ENCODE measurements at regions of chr2 and their contacts with region 1.

Region 1: GRCh38 chr2:97819754-97820153 is 106.4 kb downstream of the ZAP70 start:
- DNase-seq: no peak
- ATAC-seq: no peak
- H3K4me3 ChIP-seq: no peak overlapping the region
- H3K27ac ChIP-seq: no peak overlapping the region
- H3K4me1 ChIP-seq: no peaks in the 10 kb centered on the region
- H3K27me3 ChIP-seq: no peaks in the 10 kb centered on the region
- CTCF ChIP-seq: no peak
- EP300 ChIP-seq: no peak
- POLR2A ChIP-seq: no peak
- RAD21 ChIP-seq: no peak

Region 2: DNA sequence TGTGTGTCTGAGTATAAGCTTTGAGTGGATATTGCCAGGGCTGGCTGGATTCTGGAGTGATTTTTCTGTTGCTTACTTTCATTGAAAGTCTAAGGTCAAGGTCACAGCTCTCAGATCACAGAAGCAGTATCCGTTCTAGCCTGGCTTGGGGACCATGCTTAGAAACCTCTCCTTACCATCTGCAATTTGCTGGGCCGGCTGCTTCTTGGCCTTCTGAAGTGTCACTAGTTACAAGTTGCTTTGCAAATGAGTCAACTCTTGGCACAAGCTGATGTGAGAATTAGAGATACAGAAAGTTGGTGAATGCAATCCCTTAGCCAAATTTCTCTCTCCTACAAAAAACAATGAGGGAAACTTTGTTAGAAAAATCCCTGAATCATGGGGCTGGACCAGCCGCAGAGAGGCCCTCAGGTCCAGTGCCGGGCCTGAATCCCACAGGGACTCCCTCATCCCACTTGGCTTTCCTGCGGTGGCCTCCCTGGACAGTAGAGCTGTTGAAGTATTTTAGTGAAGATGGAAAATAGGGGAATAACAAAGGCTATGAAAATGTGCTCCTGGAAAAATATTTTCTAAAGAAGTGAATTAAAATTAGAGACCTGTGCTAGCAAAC is 433.8 kb after region 1 on chr2:
- CTCF ChIA-PET with region 1: no interaction called
- POLR2A ChIA-PET with region 1: no interaction called
- RAD21 ChIA-PET with region 1: no interaction called
- SMC1A ChIA-PET with region 1: no interaction called
- in situ Hi-C with region 1: loop called (anchors 10 kb)
- intact Hi-C with region 1: no loop called
- DNase-seq: no peak
- ATAC-seq: no peak
- H3K4me3 ChIP-seq: no peak overlapping the region
- H3K27ac ChIP-seq: no peak overlapping the region
- H3K4me1 ChIP-seq: no peaks in the 10 kb centered on the region
- H3K27me3 ChIP-seq: no peaks in the 10 kb centered on the region
- CTCF ChIP-seq: no peak
- EP300 ChIP-seq: no peak
- POLR2A ChIP-seq: no peak
- RAD21 ChIP-seq: no peak

Measured in GM12878 (cell line).